Sigmoid colon (tissue), 7 donors: ENCODE measurements at regions of chr6 and their contacts with region 1.

Region 1: GRCh38 chr6:15245361-15246216 is at the start of gene JARID2:
- DNase-seq: peak; percentile 99
- H3K4me3 ChIP-seq: peak within 1 kb of the TSS; percentile 74 to 88 (median 83)
- H3K27ac ChIP-seq: peak within 1 kb of the TSS; percentile 91 to 98 (median 96)
- H3K4me1 ChIP-seq: peaks cover 0 to 28% (median 17%) of the 10 kb centered on the region in 4 donors
- H3K27me3 ChIP-seq: no peaks in the 10 kb centered on the region
- CTCF ChIP-seq: peak in 2 of 4 experiments; percentile 8 to 17
- EP300 ChIP-seq: peak in 1 of 4 donors; percentile 36
- POLR2A ChIP-seq: peak; percentile 90 to 92
- total RNA-seq, gene JARID2: 6.1 to 7.8 (median 6.8) TPM

Region 2: GRCh38 chr6:14210663-14211561 is 1034.7 kb before region 1 on chr6:
- intact Hi-C with region 1: loop called (anchors 2 kb)
- DNase-seq: peak; percentile 96
- H3K4me3 ChIP-seq: peak overlapping the region; percentile 62 to 72 (median 70)
- H3K27ac ChIP-seq: peak overlapping the region; percentile 76 to 84 (median 82)
- H3K4me1 ChIP-seq: peaks cover 0 to 14% (median 9%) of the 10 kb centered on the region in 4 donors
- H3K27me3 ChIP-seq: no peaks in the 10 kb centered on the region
- CTCF ChIP-seq: peak in 2 of 4 experiments; percentile 45 to 62
- EP300 ChIP-seq: peak in 1 of 4 donors; percentile 7
- POLR2A ChIP-seq: peak in 1 of 2 donors; percentile 42

Region 3: DNA sequence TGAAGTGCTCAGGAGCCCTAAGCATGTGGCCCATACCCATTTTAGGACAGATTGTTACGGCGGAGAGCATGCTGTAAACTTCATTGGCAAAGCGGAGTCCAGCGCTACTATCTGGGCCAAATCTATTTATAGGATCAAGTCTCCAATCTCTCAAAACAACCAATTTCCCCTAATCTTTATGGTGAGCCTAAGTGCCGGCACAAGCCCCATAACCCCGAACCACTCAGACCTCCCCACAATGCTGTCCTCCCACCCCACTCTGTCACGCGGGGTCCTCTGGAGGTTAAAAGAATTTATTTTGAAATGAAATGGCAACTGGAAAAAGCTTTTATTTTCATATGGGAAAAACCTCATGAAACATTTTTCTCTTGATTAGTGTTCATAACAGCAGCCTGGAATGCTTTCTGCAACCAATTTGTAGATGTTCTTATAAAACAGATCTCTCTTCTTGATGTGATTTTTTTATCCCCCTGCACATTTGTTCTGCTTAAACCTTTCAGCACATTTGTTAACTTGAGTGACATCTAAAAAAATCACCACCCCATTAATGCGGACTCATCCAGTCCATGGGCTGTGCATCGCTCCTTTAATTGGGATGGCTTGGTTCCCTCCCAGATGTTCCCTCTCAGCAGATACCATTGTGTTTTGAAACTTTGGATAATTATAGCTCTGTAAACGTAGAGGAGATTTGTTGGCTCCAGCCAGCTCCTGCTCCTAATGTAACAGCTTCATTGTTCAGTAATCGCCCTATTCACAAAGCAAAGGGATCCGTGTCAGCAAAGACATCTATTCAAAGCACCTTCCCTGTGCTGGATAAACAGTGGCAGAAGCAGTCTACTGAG is 804.4 kb before region 1 on chr6:
- intact Hi-C with region 1: loop called (anchors 5 kb)
- DNase-seq: peak; percentile 85
- H3K4me3 ChIP-seq: peak overlapping the region in 1 of 4 donors; percentile 2
- H3K27ac ChIP-seq: peak overlapping the region; percentile 69 to 87 (median 78)
- H3K4me1 ChIP-seq: peaks cover 0 to 28% (median 25%) of the 10 kb centered on the region in 4 donors
- H3K27me3 ChIP-seq: no peaks in the 10 kb centered on the region
- CTCF ChIP-seq: no peak
- EP300 ChIP-seq: peak in 2 of 4 donors; percentile 34 to 50
- POLR2A ChIP-seq: no peak

Region 4: GRCh38 chr6:14476793-14477531 is 768.6 kb before region 1 on chr6:
- intact Hi-C with region 1: loop called (anchors 2 kb)
- DNase-seq: peak; percentile 96
- H3K4me3 ChIP-seq: peak overlapping the region in 3 of 4 donors; percentile 14 to 23 (median 18)
- H3K27ac ChIP-seq: peak overlapping the region; percentile 78 to 87 (median 84)
- H3K4me1 ChIP-seq: peaks cover 3 to 34% (median 28%) of the 10 kb centered on the region in 4 donors
- H3K27me3 ChIP-seq: no peaks in the 10 kb centered on the region
- CTCF ChIP-seq: no peak
- EP300 ChIP-seq: peak; percentile 94 to 99 (median 98)
- POLR2A ChIP-seq: no peak

Region 5: DNA sequence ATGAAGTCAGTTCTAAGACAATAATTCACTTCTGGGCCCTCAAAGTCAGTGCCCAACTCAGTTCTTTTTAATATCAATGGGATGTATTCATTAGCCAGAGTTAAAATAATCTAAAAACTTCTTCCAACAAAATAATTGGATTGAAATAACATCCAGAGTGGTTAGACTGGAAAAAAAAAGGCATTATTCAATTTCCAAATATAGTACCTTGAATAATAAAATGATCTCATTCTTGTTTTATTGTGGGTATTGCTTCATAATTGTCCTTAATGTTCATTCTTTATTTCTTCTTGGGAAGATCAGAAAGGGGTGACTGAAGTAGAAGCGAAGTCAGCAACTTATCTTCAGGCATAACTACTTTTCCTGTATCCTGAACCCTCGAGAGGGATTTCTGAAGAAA is 84.8 kb before region 1 on chr6:
- intact Hi-C with region 1: no loop called
- DNase-seq: no peak
- H3K4me3 ChIP-seq: no peak overlapping the region
- H3K27ac ChIP-seq: no peak overlapping the region
- H3K4me1 ChIP-seq: no peaks in the 10 kb centered on the region
- H3K27me3 ChIP-seq: no peaks in the 10 kb centered on the region
- CTCF ChIP-seq: no peak
- EP300 ChIP-seq: no peak
- POLR2A ChIP-seq: no peak

Region 6: DNA sequence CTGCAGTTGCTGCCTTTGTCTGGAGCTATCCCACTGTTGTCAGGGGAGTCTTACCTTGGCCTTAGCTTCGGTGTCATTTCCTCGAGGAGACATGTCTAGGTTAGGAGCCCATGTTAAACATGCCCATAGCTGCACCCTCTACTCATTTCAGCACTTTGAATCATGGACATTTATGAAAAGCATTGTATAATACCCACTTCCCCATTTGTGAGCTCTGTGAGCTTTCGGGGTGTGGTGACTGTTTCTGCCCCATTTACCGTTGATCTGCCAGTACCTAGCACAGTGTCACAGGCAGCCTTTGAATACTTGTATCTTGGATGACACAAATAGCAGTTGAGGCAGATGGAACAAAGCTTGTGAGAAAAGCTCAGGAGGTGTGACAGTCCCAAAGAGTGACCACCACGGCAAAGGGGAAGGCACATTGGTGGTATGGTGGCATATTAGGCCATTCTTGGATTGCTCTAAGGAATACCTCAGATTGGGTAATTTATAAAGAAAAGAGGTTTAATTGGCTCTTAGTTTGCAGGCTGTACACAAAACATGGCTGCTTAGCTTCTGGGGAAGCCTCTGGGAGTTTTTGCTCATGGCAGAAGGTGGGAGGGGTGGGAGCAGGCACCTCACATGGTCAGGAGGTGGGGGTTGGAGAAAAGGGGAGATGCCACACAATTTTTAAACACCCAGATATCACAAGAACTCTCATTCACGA is 42.2 kb after region 1 on chr6:
- intact Hi-C with region 1: no loop called
- DNase-seq: no peak
- H3K4me3 ChIP-seq: no peak overlapping the region
- H3K27ac ChIP-seq: no peak overlapping the region
- H3K4me1 ChIP-seq: peaks cover 0 to 44% (median 32%) of the 10 kb centered on the region in 4 donors
- H3K27me3 ChIP-seq: no peaks in the 10 kb centered on the region
- CTCF ChIP-seq: no peak
- EP300 ChIP-seq: no peak
- POLR2A ChIP-seq: no peak

Region 7: DNA sequence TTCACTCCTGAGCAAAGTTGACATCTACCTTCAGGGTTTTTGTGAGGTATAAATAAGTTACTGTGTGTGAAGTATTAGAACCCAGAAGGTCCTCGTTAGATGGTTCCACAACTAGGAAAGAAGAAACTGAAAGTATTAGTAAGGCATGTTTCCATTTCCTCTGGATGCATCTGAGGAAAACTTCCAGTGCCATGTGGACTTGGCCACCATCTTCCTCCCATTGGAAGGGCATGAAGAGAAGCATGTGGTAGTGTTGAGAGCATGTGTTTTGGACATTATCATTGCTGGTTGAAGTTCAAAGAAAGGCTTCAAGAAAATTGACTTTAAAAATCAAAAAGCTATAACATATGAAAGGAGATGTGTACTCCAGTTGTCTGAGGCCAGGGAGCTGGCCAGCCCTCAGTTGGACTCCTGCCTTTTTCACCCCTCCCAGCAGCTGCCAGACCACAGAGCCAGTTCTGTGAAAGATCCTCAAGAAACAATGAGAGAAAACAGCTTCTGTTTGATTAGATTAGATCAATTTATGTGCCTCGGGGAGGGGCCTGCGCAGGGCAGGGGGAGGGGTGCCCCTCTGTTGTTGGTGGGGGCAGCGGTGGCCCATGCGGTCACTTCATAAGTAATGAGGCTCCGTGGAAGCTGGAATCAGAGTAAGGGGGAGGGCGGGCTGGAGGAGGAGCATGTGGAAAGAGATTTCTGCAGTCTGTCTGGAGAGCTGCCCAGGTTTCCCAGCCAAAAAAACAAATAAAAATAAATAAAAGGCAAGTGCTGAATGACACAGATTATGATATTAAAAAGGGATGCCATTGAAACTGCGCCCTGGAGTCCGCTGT is 154.3 kb after region 1 on chr6:
- intact Hi-C with region 1: loop called (anchors 5 kb)
- DNase-seq: peak; percentile 91
- H3K4me3 ChIP-seq: peak overlapping the region; percentile 20 to 43 (median 40)
- H3K27ac ChIP-seq: peak overlapping the region; percentile 55 to 74 (median 70)
- H3K4me1 ChIP-seq: peaks cover 0 to 48% (median 35%) of the 10 kb centered on the region in 4 donors
- H3K27me3 ChIP-seq: no peaks in the 10 kb centered on the region
- CTCF ChIP-seq: no peak
- EP300 ChIP-seq: no peak
- POLR2A ChIP-seq: no peak

Region 8: DNA sequence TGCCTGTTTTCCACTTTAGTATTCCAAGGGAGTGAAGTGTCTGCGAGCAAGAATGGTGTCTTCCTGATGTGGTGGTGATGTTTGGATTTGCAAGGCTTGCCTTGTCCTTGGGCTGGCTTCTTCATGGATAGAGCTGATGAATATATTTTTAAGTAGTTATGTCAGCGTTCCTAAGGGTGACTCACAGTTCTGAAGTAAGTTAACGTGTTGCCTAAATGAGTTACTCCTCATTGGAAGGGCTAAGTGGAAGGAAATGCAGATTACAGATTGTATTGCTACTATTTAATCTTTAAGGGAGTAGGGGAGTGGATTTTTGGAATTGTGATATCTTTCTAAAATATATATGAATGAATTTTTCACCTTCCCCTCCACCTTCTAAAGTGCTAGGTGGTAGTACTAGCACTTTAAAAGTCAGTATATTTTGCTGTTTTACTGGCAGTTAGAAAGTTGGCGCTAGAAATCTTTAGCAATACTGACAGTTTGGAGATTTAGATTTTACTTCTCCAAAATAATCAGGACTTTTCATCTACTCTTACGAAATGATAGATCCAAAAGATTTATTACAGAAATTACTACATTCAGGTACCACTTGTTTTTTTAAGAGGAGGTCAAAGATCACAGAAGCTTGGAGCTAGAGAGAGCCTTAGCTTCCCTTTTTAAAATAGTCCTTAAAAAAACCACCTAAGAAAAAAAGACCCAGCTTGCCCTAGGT is 197.7 kb after region 1 on chr6:
- intact Hi-C with region 1: loop called (anchors 2 kb)
- DNase-seq: no peak
- H3K4me3 ChIP-seq: no peak overlapping the region
- H3K27ac ChIP-seq: peak overlapping the region in 2 of 4 donors; percentile 24 to 30
- H3K4me1 ChIP-seq: peaks cover 0 to 56% (median 37%) of the 10 kb centered on the region in 4 donors
- H3K27me3 ChIP-seq: no peaks in the 10 kb centered on the region
- CTCF ChIP-seq: no peak
- EP300 ChIP-seq: no peak
- POLR2A ChIP-seq: no peak

Region 9: DNA sequence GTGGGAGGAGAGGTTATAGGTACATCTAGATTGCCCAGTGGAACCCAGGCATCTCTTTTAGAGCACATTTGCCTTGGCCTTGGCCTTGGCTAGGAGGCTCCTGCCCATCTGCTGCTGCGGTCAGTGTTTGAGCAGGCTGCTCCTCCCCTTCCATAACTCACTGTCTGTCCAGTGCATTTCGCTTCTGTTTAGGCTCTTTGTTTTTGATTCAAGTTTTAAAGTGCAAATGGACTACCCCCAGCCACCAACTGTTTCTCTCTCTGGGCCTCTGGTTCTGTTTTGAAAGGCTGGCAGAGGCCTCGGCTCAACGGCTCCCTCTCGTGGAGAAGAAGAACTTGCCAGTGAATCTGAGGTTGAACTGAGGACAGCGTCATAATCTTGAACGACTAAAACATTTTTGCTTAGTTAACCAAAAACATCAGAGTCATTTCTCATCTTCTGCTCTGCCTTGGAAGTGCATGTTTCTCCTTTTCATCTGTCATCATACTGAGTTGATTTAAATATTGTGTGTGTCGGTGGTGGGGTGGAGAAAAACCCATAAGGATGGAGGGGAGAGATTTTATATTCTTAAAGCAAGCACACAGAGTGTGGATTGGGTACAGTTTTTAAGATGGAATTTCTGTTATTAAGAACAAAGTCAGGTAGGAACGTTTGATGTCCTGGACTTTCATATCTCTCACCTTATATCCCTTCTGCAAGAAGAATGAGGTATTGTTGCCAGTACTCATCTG is 245.8 kb after region 1 on chr6:
- intact Hi-C with region 1: loop called (anchors 5 kb)
- DNase-seq: peak; percentile 90
- H3K4me3 ChIP-seq: no peak overlapping the region
- H3K27ac ChIP-seq: peak overlapping the region; percentile 4 to 51 (median 32)
- H3K4me1 ChIP-seq: peaks cover 0 to 28% (median 22%) of the 10 kb centered on the region in 4 donors
- H3K27me3 ChIP-seq: no peaks in the 10 kb centered on the region
- CTCF ChIP-seq: peak; percentile 73 to 94 (median 80)
- EP300 ChIP-seq: no peak
- POLR2A ChIP-seq: no peak